HCT116 (cell line): ENCODE measurements at regions of chr12 and their contacts with region 1.

Region 1: DNA sequence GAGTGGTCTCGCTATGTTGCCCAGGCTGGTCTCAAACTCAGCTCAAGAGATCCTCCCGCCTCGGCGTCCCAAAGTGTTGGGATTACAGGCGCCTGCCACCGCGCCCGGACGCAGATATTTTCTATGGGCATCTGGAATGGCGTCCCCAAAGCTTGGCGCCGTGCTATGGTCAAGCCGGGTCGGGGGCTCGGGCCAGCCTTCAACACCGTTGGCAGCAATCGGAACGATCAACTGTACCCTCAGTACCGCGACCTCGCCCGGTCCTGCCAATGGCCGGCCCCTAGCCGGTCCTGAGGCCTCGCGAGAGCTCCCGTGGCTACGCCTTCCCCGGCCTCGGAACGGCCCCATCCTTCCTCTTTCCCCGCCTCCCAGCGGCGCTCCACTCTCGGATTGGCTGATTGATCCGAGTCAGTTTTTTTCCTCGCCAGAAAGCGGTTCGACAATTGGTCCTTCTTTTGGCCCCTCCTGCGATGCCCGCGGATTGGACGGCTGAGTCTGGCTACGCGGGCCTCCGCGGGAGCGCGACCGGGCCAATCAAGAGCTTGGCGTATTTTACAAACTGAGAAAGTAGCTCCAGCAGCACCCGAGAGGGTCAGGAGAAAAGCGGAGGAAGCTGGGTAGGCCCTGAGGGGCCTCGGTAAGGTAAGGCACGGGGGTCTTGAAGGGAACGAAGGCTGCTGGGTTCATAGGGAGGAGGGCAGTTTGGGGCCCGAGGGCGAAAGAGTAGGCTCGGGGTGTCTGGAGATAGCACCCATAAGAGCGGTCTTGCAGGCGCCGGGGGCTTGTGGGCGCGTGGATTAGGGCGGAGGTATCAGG is at the start of gene TROAP:
- DNase-seq: peak; percentile 97
- ATAC-seq: peak; percentile 96
- H3K4me3 ChIP-seq: peak within 1 kb of the TSS; percentile 72 to 99
- H3K27ac ChIP-seq: peak within 1 kb of the TSS; percentile 70
- H3K4me1 ChIP-seq: peaks cover 8 to 14% of the 10 kb centered on the region in 2 experiments
- H3K27me3 ChIP-seq: no peaks in the 10 kb centered on the region
- CTCF ChIP-seq: no peak
- POLR2A ChIP-seq: peak; percentile 51
- RAD21 ChIP-seq: no peak
- total RNA-seq, gene TROAP: 99.1 TPM

Region 2: DNA sequence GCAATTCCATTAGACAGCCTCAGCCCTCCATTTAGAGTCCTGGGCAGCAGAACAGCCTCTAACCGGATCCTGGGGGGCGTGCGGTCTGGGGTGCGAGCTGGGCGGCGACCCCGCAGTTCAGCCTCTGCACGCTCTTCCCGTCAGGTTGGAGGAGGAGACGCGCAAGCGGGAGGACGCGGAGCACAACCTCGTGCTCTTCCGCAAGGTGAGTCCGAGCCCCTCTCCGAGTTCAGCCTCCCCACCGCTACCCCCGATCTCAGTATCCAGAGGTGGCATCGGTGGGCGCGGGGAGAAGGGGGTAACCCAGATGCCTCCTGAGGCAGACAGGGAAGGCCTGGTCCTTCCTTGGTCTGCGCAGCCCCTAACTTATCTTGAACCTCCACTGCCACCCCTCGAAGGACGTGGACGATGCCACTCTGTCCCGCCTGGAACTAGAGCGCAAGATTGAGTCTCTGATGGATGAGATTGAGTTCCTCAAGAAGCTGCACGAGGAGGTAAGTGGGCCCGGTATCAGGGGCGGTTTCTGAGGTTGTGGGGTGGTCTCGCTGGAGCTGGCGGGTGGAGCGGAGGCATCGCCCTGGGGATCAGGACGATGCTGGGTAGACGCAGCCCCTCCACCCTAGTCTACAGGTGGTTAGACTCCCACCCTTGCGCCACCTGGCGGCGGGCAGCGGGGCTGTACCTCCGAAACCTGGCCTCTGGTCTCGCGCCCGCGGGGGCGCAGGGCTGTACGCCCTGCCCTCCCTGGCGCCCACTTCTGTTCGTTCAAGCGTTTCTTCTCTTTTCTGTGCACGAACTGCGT is 26.7 kb before region 1 on chr12:
- CTCF ChIA-PET with region 1: interaction called, 21 read pairs
- POLR2A ChIA-PET with region 1: interaction called, 13 read pairs
- RAD21 ChIA-PET with region 1: interaction called, 3 read pairs
- intact Hi-C with region 1: no loop called
- DNase-seq: no peak
- ATAC-seq: peak; percentile 71
- H3K4me3 ChIP-seq: peak overlapping the region; percentile 47 to 48
- H3K27ac ChIP-seq: no peak overlapping the region; the same call in 1 of the 2 replicates
- H3K4me1 ChIP-seq: peaks cover 10 to 35% of the 10 kb centered on the region in 2 experiments; a peak in 3 of 4 replicates
- H3K27me3 ChIP-seq: no peaks in the 10 kb centered on the region
- CTCF ChIP-seq: peak; percentile 66 to 91 (median 90)
- POLR2A ChIP-seq: no peak
- RAD21 ChIP-seq: no peak

Region 3: DNA sequence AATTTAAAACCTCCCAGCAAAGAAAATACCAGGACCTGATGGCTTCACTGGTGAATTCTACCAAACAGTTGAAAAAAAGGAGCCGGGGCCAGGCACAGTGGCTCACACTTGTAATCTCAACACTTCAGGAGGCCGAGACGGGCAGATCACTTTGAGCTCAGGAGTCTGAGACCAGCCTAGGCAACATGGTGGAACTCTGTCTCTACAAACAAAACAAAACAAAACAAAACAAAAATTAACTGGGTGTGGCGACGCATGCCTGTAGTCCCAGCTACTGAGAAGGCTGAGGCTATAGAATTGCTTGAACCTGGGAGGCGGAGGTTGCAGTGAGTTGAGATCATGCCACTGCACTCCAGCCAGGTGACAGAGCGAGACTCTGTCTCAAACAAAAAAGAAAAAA is 13.5 kb before region 1 on chr12:
- CTCF ChIA-PET with region 1: no interaction called
- POLR2A ChIA-PET with region 1: interaction called, 11 read pairs
- RAD21 ChIA-PET with region 1: no interaction called
- intact Hi-C with region 1: no loop called
- DNase-seq: no peak
- ATAC-seq: no peak
- H3K4me3 ChIP-seq: no peak overlapping the region
- H3K27ac ChIP-seq: no peak overlapping the region
- H3K4me1 ChIP-seq: no peaks in the 10 kb centered on the region
- H3K27me3 ChIP-seq: no peaks in the 10 kb centered on the region
- CTCF ChIP-seq: no peak
- POLR2A ChIP-seq: no peak
- RAD21 ChIP-seq: no peak

Region 4: GRCh38 chr12:49375406-49375805 is 52.5 kb after region 1 on chr12:
- CTCF ChIA-PET with region 1: no interaction called
- POLR2A ChIA-PET with region 1: no interaction called
- RAD21 ChIA-PET with region 1: no interaction called
- intact Hi-C with region 1: no loop called
- DNase-seq: no peak
- ATAC-seq: no peak
- H3K4me3 ChIP-seq: no peak overlapping the region
- H3K27ac ChIP-seq: no peak overlapping the region
- H3K4me1 ChIP-seq: peaks cover 17 to 31% of the 10 kb centered on the region in 2 experiments
- H3K27me3 ChIP-seq: no peaks in the 10 kb centered on the region
- CTCF ChIP-seq: no peak
- POLR2A ChIP-seq: no peak
- RAD21 ChIP-seq: no peak